Common myeloid progenitor, CD34-positive (primary cell): ENCODE measurements at regions of chr17 and their contacts with region 1.

Region 1: GRCh38 chr17:76557368-76558197 is 17.7 kb downstream of the PRCD start:
- DNase-seq: peak; percentile 98 to 99 (median 98)
- H3K4me3 ChIP-seq: peak overlapping the region; percentile 30 to 99 (median 87)
- H3K27ac ChIP-seq: peak overlapping the region; percentile 89 to 90
- H3K4me1 ChIP-seq: peaks cover 13 to 78% (median 57%) of the 10 kb centered on the region in 4 experiments
- H3K27me3 ChIP-seq: no peaks in the 10 kb centered on the region

Region 2: GRCh38 chr17:76492989-76493501 is 64.5 kb before region 1 on chr17:
- CTCF ChIA-PET with region 1: no interaction called
- POLR2A ChIA-PET with region 1: no interaction called
- DNase-seq: peak; percentile 62 to 90 (median 87)
- H3K4me3 ChIP-seq: peak overlapping the region in 5 of 7 experiments; percentile 24 to 63 (median 50)
- H3K27ac ChIP-seq: peak overlapping the region; percentile 50 to 73
- H3K4me1 ChIP-seq: peaks cover 0 to 58% (median 36%) of the 10 kb centered on the region in 4 experiments
- H3K27me3 ChIP-seq: no peaks in the 10 kb centered on the region

Region 3: DNA sequence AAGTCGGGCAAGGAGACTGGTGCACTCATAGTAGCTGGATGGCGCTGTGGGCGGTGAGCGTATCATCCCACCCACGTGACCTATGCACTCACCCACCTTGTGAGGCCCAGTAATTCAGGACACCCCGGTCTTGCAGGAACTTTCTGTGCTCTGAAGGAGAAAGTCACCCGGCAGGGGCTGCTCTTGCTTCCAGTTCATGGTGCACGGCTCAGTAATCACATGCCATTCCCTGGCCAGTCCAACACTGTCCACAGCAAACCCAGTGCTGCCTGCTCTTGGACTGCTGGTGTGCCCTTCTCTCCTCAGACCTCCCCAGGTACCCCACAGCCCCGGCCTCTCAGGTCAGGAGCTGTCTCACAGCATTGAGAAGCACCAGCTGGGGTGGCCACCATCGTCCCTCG is 39.9 kb before region 1 on chr17:
- CTCF ChIA-PET with region 1: interaction called, 63 read pairs
- POLR2A ChIA-PET with region 1: no interaction called
- DNase-seq: no peak
- H3K4me3 ChIP-seq: no peak overlapping the region
- H3K27ac ChIP-seq: no peak overlapping the region
- H3K4me1 ChIP-seq: peaks cover 0 to 23% (median 20%) of the 10 kb centered on the region in 4 experiments
- H3K27me3 ChIP-seq: no peaks in the 10 kb centered on the region

Region 4: DNA sequence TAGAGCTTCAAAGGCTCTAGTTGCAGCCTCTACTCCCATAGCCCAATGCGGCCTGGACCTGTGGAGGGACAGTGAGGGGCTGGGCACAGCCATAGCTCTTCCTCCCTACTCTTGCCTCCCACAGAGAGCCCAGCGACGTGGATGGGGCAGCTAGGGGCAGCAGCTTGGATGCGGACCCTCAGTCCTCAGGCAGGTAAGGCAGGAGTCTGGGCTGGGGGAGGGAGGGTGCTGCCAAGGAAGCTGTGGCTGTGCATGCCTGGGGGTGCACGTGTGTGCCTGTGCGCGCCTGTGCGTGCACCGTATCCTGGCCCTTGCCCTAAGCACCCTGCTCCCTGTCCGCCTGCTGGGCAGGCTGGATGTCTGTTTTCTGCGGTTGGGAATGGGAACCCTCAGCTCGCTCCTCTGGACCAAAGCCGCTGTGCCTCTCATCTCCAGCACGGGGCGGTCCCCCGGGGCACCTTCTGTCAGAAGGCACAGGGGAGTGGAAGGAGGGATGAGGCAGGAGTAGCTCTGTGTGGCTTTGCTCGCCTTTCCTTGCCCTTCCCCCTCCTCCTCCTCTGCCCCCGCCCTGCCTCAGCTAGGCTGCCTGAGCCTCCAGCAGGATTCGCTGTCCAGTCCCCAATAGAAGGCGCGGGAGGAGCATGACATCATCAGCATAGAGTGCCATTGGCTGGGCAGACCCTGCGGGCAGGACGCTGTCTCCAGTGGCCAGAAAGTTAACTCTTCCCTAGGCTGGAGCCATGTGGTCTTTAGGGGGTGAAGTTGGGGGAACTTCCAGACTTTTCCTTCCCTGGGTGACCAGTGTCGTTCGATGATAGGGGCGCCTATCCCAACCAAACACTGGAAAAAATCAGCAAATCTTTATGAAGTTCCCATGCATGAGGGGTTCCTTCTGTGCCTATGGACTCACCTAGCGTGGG is 16.9 kb before region 1 on chr17:
- CTCF ChIA-PET with region 1: interaction called, 20 read pairs
- POLR2A ChIA-PET with region 1: interaction called, 5 read pairs
- DNase-seq: peak; percentile 71 to 91 (median 89)
- H3K4me3 ChIP-seq: peak overlapping the region in 5 of 7 experiments; percentile 33 to 73 (median 53)
- H3K27ac ChIP-seq: no peak overlapping the region
- H3K4me1 ChIP-seq: peaks cover 0 to 51% (median 45%) of the 10 kb centered on the region in 4 experiments
- H3K27me3 ChIP-seq: peaks cover 4 to 41% (median 23%) of the 10 kb centered on the region in 5 experiments

Region 5: GRCh38 chr17:76578344-76578979 is 20.9 kb after region 1 on chr17:
- CTCF ChIA-PET with region 1: interaction called, 50 read pairs
- POLR2A ChIA-PET with region 1: no interaction called
- DNase-seq: no peak
- H3K4me3 ChIP-seq: no peak overlapping the region
- H3K27ac ChIP-seq: no peak overlapping the region
- H3K4me1 ChIP-seq: peaks cover 0 to 10% (median 3%) of the 10 kb centered on the region in 4 experiments
- H3K27me3 ChIP-seq: peaks cover 0 to 3% (median 0%) of the 10 kb centered on the region in 5 experiments

Region 6: DNA sequence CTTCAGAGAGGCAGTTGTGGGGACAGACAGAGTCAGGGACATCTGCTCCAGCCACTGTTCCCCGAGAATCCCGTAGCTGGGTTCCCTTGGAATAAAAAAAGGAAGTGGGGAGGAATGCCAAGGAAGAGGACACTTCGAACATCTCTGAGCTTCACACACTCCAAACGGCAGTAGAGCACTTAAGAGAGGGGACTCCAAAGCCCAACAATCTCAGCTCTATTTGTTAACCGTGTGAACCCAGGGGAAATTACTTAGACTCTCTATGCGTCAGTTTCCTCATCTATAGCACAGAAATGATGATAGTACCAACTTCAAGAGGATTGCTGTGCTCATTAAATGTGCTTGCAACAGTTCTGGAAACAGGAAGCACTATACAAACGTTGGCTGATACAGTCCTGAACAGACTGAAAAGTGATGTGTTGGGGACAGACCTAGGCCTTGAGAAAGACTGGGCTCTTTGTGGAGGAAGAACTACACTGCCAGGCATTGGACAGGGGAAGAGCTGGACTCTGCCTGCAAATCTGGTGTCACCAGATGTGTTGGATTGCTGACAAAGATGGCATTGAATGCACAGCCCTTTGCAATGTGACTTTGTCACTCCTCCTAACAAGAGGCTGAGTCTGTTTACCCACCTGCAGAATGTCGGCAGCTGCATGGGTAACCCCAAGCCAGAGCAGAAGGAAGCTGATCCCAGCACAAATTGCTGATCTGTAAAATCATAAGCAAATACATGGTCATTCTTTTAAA is 40.3 kb after region 1 on chr17:
- CTCF ChIA-PET with region 1: interaction called, 14 read pairs
- POLR2A ChIA-PET with region 1: interaction called, 3 read pairs
- DNase-seq: peak in 2 of 3 donors; percentile 20 to 23
- H3K4me3 ChIP-seq: no peak overlapping the region
- H3K27ac ChIP-seq: no peak overlapping the region
- H3K4me1 ChIP-seq: peaks cover 7 to 33% (median 11%) of the 10 kb centered on the region in 4 experiments
- H3K27me3 ChIP-seq: no peaks in the 10 kb centered on the region

Region 7: GRCh38 chr17:76957678-76958464 is 400.3 kb after region 1 on chr17:
- CTCF ChIA-PET with region 1: no interaction called
- POLR2A ChIA-PET with region 1: no interaction called
- DNase-seq: no peak
- H3K4me3 ChIP-seq: no peak overlapping the region
- H3K27ac ChIP-seq: no peak overlapping the region
- H3K4me1 ChIP-seq: peaks cover 0 to 9% (median 4%) of the 10 kb centered on the region in 4 experiments
- H3K27me3 ChIP-seq: peaks cover 0 to 3% (median 0%) of the 10 kb centered on the region in 5 experiments